Testis (tissue), 5 donors: ENCODE measurements at regions of chr22 and their contacts with region 1.

Region 1: GRCh38 chr22:23281406-23282088 is 101.2 kb downstream of the BCR start:
- DNase-seq: peak; percentile 90
- H3K4me3 ChIP-seq: no peak overlapping the region
- H3K27ac ChIP-seq: peak overlapping the region; percentile 34 to 56
- H3K4me1 ChIP-seq: peaks cover 49% of the 10 kb centered on the region
- H3K27me3 ChIP-seq: no peaks in the 10 kb centered on the region
- CTCF ChIP-seq: peak; percentile 90 to 93 (median 92)
- POLR2A ChIP-seq: no peak

Region 2: GRCh38 chr22:23178512-23179254 is 102.9 kb before region 1 on chr22:
- intact Hi-C with region 1: loop called (anchors 2 kb)
- DNase-seq: peak; percentile 71
- H3K4me3 ChIP-seq: no peak overlapping the region
- H3K27ac ChIP-seq: peak overlapping the region; percentile 75 to 86
- H3K4me1 ChIP-seq: peaks cover 43% of the 10 kb centered on the region
- H3K27me3 ChIP-seq: no peaks in the 10 kb centered on the region
- CTCF ChIP-seq: peak; percentile 92 to 95 (median 92)
- POLR2A ChIP-seq: no peak

Region 3: GRCh38 chr22:23219822-23220484 is 61.6 kb before region 1 on chr22:
- intact Hi-C with region 1: no loop called
- DNase-seq: no peak
- H3K4me3 ChIP-seq: no peak overlapping the region
- H3K27ac ChIP-seq: no peak overlapping the region
- H3K4me1 ChIP-seq: peaks cover 41% of the 10 kb centered on the region
- H3K27me3 ChIP-seq: no peaks in the 10 kb centered on the region
- CTCF ChIP-seq: no peak
- POLR2A ChIP-seq: no peak